Posterior vena cava (tissue), 2 donors: ENCODE measurements at regions of chrX and their contacts with region 1.

Region 1: DNA sequence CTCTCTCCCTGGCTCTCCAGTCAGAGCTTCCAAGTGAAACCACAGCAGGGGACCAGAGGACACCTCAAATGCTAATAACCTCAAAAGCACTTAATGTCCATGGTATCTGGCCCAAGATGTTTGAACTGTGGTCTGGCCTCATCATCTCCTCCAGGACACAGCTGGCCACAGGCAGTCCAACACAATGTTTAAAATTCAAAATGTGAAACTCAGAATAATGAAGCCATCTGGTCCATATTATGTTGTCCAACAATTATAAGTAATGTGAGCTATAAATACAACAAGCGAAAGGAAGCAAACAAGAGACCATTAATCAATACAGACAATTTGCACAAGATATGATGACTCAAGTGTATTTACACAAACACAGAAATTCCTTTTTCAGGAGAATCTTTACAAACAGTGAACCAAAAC is 90.7 kb upstream of the S100G start:
- DNase-seq: no peak

Region 2: DNA sequence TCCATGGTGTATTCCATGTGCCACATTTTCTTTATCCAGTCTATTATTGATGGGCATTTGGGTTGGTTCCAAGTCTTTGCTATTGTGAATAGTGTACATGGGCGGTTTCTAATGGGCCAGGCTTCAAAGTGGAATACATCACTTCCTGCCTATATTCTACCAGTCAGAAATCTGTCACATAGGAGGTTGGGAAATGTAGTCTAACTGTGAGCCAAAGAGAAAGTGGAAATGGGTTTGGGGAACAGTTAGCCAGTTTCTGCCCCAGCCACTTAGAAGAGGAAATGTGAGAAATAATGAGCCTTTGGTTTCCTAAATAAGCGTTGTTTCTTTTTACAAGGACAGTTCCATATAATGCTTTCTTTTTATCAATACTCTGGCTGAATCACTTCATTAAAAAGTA is 619.5 kb before region 1 on chrX:
- intact Hi-C with region 1: loop called in 1 of 2 experiments (anchors 5 kb)
- DNase-seq: no peak

Region 3: GRCh38 chrX:16573781-16574180 is 14.6 kb after region 1 on chrX:
- intact Hi-C with region 1: no loop called
- DNase-seq: no peak

Region 4: GRCh38 chrX:16654093-16654492 is 94.9 kb after region 1 on chrX:
- intact Hi-C with region 1: no loop called
- DNase-seq: no peak